ENCODE measurements at regions of chr1 and their contacts with region 1.

Region 1: DNA sequence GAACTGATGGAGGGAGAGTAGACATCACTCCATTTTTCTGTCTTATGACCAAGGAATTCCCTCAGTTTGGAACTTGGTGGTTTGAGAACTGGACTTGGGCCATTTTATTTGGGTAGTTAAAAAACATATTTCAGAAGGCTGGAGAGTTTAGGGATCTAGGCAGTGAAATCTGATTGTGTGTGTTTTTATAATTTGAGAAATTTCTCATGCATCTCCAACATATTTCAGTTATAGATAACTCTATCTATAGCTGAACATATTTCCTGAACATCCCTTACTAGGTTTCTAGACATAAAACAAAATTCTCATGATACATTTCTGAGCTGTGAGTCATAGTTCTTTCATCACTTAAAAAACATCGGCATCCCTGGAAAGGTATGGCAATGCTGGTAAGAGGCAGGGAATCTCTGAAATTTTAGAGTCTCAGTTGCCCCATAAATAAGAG is 102.7 kb downstream of the FASLG start:
- DNase-seq: no peak

Region 2: GRCh38 chr1:172638885-172639831 is 122.4 kb before region 1 on chr1:
- in situ Hi-C with region 1: no loop called
- DNase-seq: no peak

Region 3: GRCh38 chr1:173420330-173420806 is 658.8 kb after region 1 on chr1:
- in situ Hi-C with region 1: loop called (anchors 25 kb)
- DNase-seq: peak; percentile 88

Measured in KBM-7 (cell line).